Caco-2 (cell line): ENCODE measurements at regions of chr6 and their contacts with region 1.

Region 1: DNA sequence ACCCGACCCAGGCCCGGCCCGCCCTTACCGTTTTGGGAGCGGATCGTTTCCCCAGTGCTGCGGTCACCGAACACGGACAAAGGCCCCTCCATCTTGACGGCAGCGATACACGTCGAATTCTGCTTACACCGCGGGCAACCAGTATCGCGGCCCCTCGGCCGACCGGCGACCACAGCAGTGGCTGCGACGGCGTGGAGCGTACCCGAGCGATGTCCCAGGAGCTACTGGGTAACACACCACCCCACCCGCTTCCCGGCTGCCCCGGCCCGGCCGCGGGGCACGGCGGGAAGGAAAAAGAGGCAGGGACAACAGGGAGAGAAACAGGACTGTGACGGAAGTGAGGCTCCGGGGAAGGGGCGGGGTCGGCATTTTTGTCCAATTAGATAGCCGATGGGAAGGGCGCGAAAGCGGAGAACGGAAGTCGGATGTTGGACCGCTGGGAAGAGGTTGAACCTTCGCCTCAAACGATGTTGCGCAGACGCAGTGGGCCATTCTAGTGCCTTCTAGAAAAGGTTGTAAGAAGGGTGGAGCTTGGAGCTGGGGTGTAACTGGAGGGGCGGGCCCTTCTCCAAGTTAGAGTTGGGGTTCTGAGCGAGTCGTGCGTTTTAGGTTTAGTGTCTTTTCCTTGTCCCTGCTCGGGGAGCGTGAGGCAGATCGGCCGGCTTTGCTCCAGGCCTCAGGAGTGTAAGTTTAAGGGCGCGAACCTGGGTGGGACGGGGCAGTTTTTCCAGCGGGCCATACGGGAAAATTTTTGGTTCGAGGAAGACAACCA is at the start of gene TCP1:
- DNase-seq: peak; percentile 98 to 99
- H3K4me3 ChIP-seq: peak within 1 kb of the TSS; percentile 95
- H3K4me3 Mint-ChIP-seq: peak within 1 kb of the TSS; percentile 96
- H3K27ac Mint-ChIP-seq: peak within 1 kb of the TSS; percentile 98
- H3K4me1 ChIP-seq: peaks cover 18% of the 10 kb centered on the region
- H3K4me1 Mint-ChIP-seq: peaks cover 18% of the 10 kb centered on the region
- H3K27me3 ChIP-seq: no peaks in the 10 kb centered on the region
- H3K27me3 Mint-ChIP-seq: no peaks in the 10 kb centered on the region
- CTCF ChIP-seq: no peak
- total RNA-seq, gene TCP1: 286 and 333 TPM in 2 replicates

Region 2: DNA sequence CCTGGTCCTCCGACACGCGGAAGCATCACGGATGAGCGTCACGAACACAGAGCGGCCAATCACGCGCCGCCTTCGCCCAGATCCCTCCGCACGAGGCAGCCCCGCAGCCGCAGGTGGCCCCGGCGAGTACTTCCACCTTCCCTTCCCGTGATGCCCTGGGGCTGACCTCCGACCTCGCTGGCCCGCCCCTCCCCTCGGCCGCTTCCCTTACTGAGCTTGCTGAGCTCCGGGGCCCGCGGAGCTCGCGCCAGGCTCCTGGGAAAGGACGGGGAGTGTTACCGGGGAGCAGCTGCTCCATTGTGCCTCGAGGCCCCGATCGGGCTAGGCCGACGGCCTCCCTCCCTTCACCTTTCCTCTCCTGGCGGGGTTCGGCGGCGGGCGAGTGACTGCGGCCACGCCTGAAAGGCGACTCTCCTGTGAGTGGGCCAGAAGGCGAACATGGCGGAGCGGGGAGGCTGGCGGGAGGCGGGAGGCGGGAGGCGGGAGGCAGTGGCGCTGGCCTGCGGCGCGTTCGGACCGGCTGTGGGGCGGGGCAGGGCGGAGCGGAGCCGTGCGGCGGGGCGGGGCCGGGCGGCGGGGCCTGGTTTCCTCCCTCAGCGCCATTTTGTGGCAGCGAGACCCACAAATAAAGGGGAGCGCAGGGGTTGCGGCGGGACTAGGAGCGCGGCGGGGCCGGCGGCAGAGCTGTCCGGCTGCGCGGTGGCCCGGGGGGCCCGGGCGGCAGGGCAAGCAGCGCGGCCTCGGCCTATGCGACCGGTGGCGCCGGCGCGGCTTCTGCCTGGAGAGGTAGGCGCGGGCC is 62.4 kb before region 1 on chr6 and contains the start of gene WTAP:
- CTCF ChIA-PET with region 1: no interaction called
- POLR2A ChIA-PET with region 1: interaction called, 71 read pairs
- intact Hi-C with region 1: loop called (anchors 1 kb)
- DNase-seq: peak; percentile 98
- H3K4me3 ChIP-seq: peak within 1 kb of the TSS; percentile 96
- H3K4me3 Mint-ChIP-seq: peak within 1 kb of the TSS; percentile 97
- H3K27ac Mint-ChIP-seq: peak within 1 kb of the TSS; percentile 96
- H3K4me1 ChIP-seq: peaks cover 3% of the 10 kb centered on the region; the same call in 1 of the 2 replicates
- H3K4me1 Mint-ChIP-seq: peaks cover 6% of the 10 kb centered on the region
- H3K27me3 ChIP-seq: no peaks in the 10 kb centered on the region
- H3K27me3 Mint-ChIP-seq: no peaks in the 10 kb centered on the region
- CTCF ChIP-seq: no peak
- total RNA-seq, gene WTAP: 109 and 114 TPM in 2 replicates

Region 3: GRCh38 chr6:159761873-159762680 is 27.5 kb before region 1 on chr6 and contains the start of gene ACAT2:
- CTCF ChIA-PET with region 1: interaction called, 4 read pairs
- POLR2A ChIA-PET with region 1: interaction called, 21 read pairs
- intact Hi-C with region 1: loop called (anchors 1 kb)
- DNase-seq: peak; percentile 96 to 98
- H3K4me3 ChIP-seq: peak within 1 kb of the TSS; percentile 84
- H3K4me3 Mint-ChIP-seq: peak within 1 kb of the TSS; percentile 82
- H3K27ac Mint-ChIP-seq: peak within 1 kb of the TSS; percentile 98
- H3K4me1 ChIP-seq: peaks cover 16% of the 10 kb centered on the region
- H3K4me1 Mint-ChIP-seq: peaks cover 37% of the 10 kb centered on the region
- H3K27me3 ChIP-seq: no peaks in the 10 kb centered on the region
- H3K27me3 Mint-ChIP-seq: no peaks in the 10 kb centered on the region
- CTCF ChIP-seq: no peak
- total RNA-seq, gene ACAT2: 122 and 131 TPM in 2 replicates

Region 4: GRCh38 chr6:159852877-159853276 is 63.3 kb after region 1 on chr6:
- CTCF ChIA-PET with region 1: no interaction called
- POLR2A ChIA-PET with region 1: interaction called, 4 read pairs
- intact Hi-C with region 1: loop called (anchors 5 kb)
- DNase-seq: peak in 1 of 2 experiments; percentile 32
- H3K4me3 ChIP-seq: no peak overlapping the region
- H3K4me3 Mint-ChIP-seq: no peak overlapping the region
- H3K27ac Mint-ChIP-seq: no peak overlapping the region
- H3K4me1 ChIP-seq: no peaks in the 10 kb centered on the region
- H3K4me1 Mint-ChIP-seq: no peaks in the 10 kb centered on the region
- H3K27me3 ChIP-seq: no peaks in the 10 kb centered on the region
- H3K27me3 Mint-ChIP-seq: peaks cover 8% of the 10 kb centered on the region
- CTCF ChIP-seq: peak in 1 of 2 experiments; percentile 21

Region 5: GRCh38 chr6:159899994-159900745 is 110.6 kb after region 1 on chr6:
- CTCF ChIA-PET with region 1: no interaction called
- POLR2A ChIA-PET with region 1: no interaction called
- intact Hi-C with region 1: no loop called
- DNase-seq: peak in 1 of 2 experiments; percentile 23
- H3K4me3 ChIP-seq: no peak overlapping the region
- H3K4me3 Mint-ChIP-seq: no peak overlapping the region
- H3K27ac Mint-ChIP-seq: no peak overlapping the region
- H3K4me1 ChIP-seq: no peaks in the 10 kb centered on the region
- H3K4me1 Mint-ChIP-seq: no peaks in the 10 kb centered on the region
- H3K27me3 ChIP-seq: no peaks in the 10 kb centered on the region; the same call in 1 of the 2 replicates
- H3K27me3 Mint-ChIP-seq: peaks cover 4% of the 10 kb centered on the region
- CTCF ChIP-seq: no peak